ENCODE measurements at regions of chr6 and their contacts with region 1.

Region 1: DNA sequence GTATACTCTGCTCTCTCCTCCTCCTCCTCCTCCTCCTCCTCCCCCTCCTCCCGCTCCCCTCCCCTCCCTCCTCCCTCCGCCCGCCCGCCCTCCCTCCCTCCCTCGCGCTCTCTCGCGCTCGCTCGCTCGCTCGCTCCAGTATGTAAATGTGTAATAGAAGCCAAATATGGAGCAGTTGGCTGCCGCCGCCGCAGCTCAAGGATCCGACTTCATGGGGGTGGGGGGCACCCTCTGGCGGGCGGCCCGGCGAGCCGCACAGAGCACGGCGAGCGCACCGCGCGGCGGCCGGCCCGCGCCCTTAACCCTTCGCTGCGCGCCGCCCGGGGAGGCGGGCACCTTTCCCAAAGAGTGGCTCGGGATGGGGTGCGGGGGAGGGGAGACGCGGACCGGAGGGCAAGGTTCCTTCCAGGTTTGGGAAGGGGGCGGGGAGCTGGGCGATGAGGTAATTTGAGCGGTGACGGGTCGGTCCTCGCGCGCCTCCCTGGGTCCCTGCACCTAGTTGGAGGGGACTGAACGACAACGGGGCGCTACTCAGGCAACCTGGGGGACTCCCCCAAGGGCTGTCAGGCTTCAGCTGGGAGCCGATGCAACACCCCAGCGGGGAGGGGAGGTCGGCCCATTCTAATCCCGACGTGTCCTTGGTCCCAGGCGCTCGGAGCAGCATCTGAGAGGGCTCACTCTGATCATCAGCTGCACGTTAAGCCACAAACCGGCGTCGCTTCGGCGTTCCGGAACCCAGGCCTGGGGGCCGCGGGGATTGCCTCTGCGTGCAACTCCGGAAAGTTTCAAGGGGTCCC is 409 bp upstream of the ATXN1 start:
- DNase-seq: peak; percentile 89
- H3K4me3 Mint-ChIP-seq: peak overlapping the region; percentile 98
- H3K27ac Mint-ChIP-seq: peak overlapping the region; percentile 92
- H3K4me1 Mint-ChIP-seq: peaks cover 59% of the 10 kb centered on the region
- H3K27me3 Mint-ChIP-seq: no peaks in the 10 kb centered on the region

Region 2: GRCh38 chr6:16136621-16137450 is 624.8 kb before region 1 on chr6:
- CTCF ChIA-PET with region 1: no interaction called
- intact Hi-C with region 1: loop called (anchors 2 kb)
- DNase-seq: peak; percentile 76
- H3K4me3 Mint-ChIP-seq: peak overlapping the region; percentile 55
- H3K27ac Mint-ChIP-seq: peak overlapping the region; percentile 87
- H3K4me1 Mint-ChIP-seq: peaks cover 70% of the 10 kb centered on the region
- H3K27me3 Mint-ChIP-seq: no peaks in the 10 kb centered on the region

Region 3: DNA sequence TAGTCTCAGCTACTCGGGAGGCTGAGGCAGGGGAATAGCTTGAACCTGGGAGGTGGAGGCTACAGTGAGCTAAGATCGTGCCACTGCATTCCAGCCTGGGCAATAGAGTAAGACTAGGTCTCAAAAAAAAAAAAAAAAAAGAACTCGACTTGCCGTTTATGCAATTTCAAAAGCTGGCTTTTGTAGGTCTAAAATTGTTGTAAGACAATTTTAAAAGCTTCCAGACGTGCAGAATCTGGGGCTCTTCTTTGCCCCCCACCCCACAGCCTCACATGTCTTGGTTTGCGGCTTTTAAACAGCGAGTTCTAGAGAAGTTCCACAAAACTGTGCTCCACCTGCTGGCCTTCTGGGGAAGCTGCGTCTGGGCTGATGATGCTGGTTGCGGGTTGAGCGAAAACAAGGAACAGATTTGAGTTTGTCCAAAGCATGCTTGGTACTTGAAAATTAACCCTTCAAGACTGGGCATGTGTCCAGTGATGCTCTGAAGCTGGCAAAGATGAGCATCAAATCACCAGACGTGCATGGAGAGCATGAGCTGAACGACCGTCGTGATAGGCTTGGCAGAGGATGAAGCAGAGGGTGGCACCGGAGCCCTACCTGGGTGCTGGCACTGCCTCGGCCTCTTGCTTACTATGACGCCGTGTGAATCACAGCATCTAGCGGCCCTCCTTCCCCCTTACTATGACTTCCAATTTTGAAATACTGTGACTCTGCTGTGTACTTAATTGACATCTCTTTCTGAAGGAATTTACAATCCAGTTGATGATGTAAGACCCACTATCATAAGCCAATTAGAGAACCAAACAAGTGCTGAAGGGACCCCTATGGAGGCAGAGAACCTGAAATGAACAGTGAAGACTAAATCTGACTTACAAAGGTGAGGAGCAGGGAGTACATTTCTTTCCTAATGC is 351.9 kb before region 1 on chr6:
- CTCF ChIA-PET with region 1: interaction called, 13 read pairs
- intact Hi-C with region 1: loop called (anchors 2 kb)
- DNase-seq: peak; percentile 75
- H3K4me3 Mint-ChIP-seq: peak overlapping the region; percentile 30
- H3K27ac Mint-ChIP-seq: peak overlapping the region; percentile 53
- H3K4me1 Mint-ChIP-seq: peaks cover 31% of the 10 kb centered on the region
- H3K27me3 Mint-ChIP-seq: no peaks in the 10 kb centered on the region

Region 4: DNA sequence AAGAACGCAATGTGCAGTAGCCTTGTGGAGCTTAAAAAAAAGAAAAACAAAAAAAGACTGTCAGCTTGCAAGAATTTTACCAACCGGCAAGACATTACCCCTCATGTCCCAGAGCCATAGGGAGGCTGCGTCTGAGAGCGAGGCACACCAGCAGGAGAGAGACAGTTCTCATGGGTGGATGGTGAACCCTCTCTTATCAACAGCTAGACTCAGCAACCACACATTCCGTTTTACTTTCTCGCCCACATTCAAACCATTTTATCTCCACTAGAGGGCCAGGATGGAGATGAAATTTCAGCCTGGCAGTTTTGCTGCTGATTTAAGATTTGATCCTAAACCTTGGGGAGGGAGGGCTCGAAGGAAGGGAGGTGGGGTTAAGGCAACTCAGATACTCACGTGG is 247.4 kb before region 1 on chr6:
- CTCF ChIA-PET with region 1: interaction called, 87 read pairs
- intact Hi-C with region 1: loop called (anchors 1 kb)
- DNase-seq: peak; percentile 48
- H3K4me3 Mint-ChIP-seq: no peak overlapping the region
- H3K27ac Mint-ChIP-seq: no peak overlapping the region
- H3K4me1 Mint-ChIP-seq: peaks cover 53% of the 10 kb centered on the region
- H3K27me3 Mint-ChIP-seq: no peaks in the 10 kb centered on the region

Region 5: GRCh38 chr6:16670183-16670582 is 91.5 kb before region 1 on chr6:
- CTCF ChIA-PET with region 1: interaction called, 3 read pairs
- intact Hi-C with region 1: loop called (anchors 1 kb)
- DNase-seq: no peak
- H3K4me3 Mint-ChIP-seq: no peak overlapping the region
- H3K27ac Mint-ChIP-seq: peak overlapping the region; percentile 25
- H3K4me1 Mint-ChIP-seq: peaks cover 38% of the 10 kb centered on the region
- H3K27me3 Mint-ChIP-seq: no peaks in the 10 kb centered on the region

Region 6: GRCh38 chr6:16712931-16713484 is 48.7 kb before region 1 on chr6:
- CTCF ChIA-PET with region 1: interaction called, 3 read pairs
- intact Hi-C with region 1: loop called (anchors 1 kb)
- DNase-seq: peak; percentile 23
- H3K4me3 Mint-ChIP-seq: peak overlapping the region; percentile 51
- H3K27ac Mint-ChIP-seq: peak overlapping the region; percentile 75
- H3K4me1 Mint-ChIP-seq: peaks cover 29% of the 10 kb centered on the region
- H3K27me3 Mint-ChIP-seq: no peaks in the 10 kb centered on the region

Region 7: DNA sequence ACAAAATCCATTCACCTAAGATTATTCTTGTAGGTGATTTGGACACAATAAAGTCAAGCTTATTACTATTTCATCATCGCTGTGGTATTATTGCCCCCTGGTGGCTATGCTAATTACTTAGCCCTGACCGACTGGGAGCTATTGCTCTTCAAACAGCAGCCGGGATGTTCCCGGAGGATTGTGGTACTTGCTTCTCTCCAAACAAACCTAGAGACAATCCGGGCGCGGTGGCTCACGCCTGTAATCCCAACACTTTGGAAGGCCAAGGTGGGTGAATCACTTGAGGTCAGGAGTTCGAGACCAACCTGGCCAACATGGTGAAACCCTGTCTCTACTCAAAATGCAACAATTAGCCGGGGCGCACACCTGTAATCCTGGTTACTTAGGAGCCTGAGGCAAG is 324.8 kb after region 1 on chr6:
- CTCF ChIA-PET with region 1: no interaction called
- intact Hi-C with region 1: loop called (anchors 1 kb)
- DNase-seq: peak; percentile 46
- H3K4me3 Mint-ChIP-seq: no peak overlapping the region
- H3K27ac Mint-ChIP-seq: no peak overlapping the region
- H3K4me1 Mint-ChIP-seq: no peaks in the 10 kb centered on the region
- H3K27me3 Mint-ChIP-seq: peaks cover 8% of the 10 kb centered on the region